ENCODE measurements at regions of chr2 and their contacts with region 1.

Region 1: DNA sequence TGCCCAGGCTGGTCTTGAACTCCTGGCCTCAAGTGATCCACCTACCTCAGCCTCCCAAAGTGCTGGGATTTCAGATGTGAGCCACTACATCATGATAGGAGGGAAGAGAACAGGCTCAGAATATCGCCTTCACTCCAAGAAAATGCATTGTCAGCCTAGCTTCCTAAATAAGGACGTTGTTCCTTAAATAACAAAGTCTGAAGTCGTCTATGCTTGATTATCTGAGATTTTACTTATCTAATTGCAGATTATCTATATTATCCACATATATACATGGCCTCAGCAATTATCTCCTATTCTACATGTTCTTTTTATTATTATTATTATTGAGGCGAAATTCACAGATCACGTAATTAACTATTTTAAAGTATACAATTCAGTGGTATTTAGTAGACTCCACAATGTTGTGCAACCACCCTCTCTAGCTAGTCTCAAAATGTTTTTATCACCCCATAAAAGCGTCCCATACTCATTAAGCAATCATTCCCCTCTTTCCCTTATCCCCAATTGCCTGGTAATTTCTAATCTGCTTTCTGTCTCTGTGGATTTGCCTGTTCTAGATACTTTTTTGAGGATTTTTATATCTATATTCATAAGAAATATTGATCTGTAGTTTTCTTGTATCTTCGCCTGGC is 95.1 kb upstream of the RFX8 start:
- DNase-seq: no peak
- ATAC-seq: no peak
- H3K4me3 ChIP-seq: peak overlapping the region; percentile 12
- H3K4me3 Mint-ChIP-seq: peak overlapping the region; percentile 61 to 90 (median 80)
- H3K27ac ChIP-seq: no peak overlapping the region
- H3K27ac Mint-ChIP-seq: peak overlapping the region; percentile 82 to 96 (median 91)
- H3K4me1 ChIP-seq: peaks cover 10 to 33% of the 10 kb centered on the region in 2 donors
- H3K4me1 Mint-ChIP-seq: peaks cover 16 to 75% (median 62%) of the 10 kb centered on the region in 7 donors
- H3K27me3 ChIP-seq: no peaks in the 10 kb centered on the region
- H3K27me3 Mint-ChIP-seq: peaks cover 0 to 15% (median 0%) of the 10 kb centered on the region in 5 donors

Region 2: GRCh38 chr2:100235098-100235497 is 1334.9 kb before region 1 on chr2:
- CTCF ChIA-PET with region 1: no interaction called
- POLR2A ChIA-PET with region 1: no interaction called
- intact Hi-C with region 1: no loop called
- DNase-seq: peak in 5 of 9 donors; percentile 5 to 36 (median 32)
- ATAC-seq: peak; percentile 63
- H3K4me3 ChIP-seq: no peak overlapping the region
- H3K4me3 Mint-ChIP-seq: peak overlapping the region; percentile 8 to 70 (median 45)
- H3K27ac ChIP-seq: no peak overlapping the region
- H3K27ac Mint-ChIP-seq: peak overlapping the region; percentile 7 to 90 (median 76)
- H3K4me1 ChIP-seq: peaks cover 8 to 15% of the 10 kb centered on the region in 2 donors
- H3K4me1 Mint-ChIP-seq: peaks cover 12 to 33% (median 25%) of the 10 kb centered on the region in 7 donors
- H3K27me3 ChIP-seq: no peaks in the 10 kb centered on the region
- H3K27me3 Mint-ChIP-seq: peaks cover 0 to 4% (median 0%) of the 10 kb centered on the region in 5 donors

Region 3: GRCh38 chr2:101473911-101474701 is 95.9 kb before region 1 on chr2:
- CTCF ChIA-PET with region 1: no interaction called
- POLR2A ChIA-PET with region 1: interaction called, 3 read pairs
- intact Hi-C with region 1: loop called (anchors 2 to 5 kb)
- DNase-seq: peak; percentile 7 to 70 (median 20)
- ATAC-seq: peak; percentile 46
- H3K4me3 ChIP-seq: peak overlapping the region; percentile 48
- H3K4me3 Mint-ChIP-seq: peak overlapping the region; percentile 81 to 90 (median 85)
- H3K27ac ChIP-seq: no peak overlapping the region
- H3K27ac Mint-ChIP-seq: peak overlapping the region in 5 of 9 donors; percentile 36 to 92 (median 73)
- H3K4me1 ChIP-seq: peaks cover 0 to 6% of the 10 kb centered on the region in 2 donors
- H3K4me1 Mint-ChIP-seq: peaks cover 6 to 50% (median 11%) of the 10 kb centered on the region in 7 donors
- H3K27me3 ChIP-seq: no peaks in the 10 kb centered on the region
- H3K27me3 Mint-ChIP-seq: peaks cover 0 to 7% (median 0%) of the 10 kb centered on the region in 5 donors

Region 4: DNA sequence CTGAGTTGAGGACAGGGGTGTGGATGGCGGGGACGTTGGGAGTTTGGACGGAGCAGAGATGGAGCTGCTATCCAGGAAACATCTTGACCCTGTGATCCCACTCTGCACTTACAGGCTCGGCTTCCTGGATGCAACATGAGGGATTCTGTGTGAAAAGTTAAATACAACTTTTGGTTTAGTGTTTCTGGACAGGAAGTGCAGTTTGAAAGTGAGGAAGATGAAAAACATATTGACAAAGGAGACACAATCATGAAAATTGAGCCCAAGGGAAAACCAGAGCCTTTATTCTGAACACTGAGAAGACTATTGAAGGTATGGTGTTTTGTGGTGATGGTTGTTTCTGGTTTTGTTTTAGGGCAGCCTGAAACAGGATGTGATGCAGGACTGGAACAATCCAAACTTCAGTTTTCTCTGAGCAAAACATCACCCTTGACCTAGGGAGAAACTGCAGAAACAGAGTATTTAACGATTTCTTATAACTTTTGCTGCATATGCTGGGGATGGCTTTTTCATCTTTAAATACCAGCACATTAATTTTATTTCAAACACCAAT is 18.6 kb before region 1 on chr2:
- CTCF ChIA-PET with region 1: no interaction called
- POLR2A ChIA-PET with region 1: interaction called, 4 read pairs
- intact Hi-C with region 1: loop called (anchors 1 to 2 kb)
- DNase-seq: peak in 2 of 9 donors; percentile 14 to 24
- ATAC-seq: no peak
- H3K4me3 ChIP-seq: no peak overlapping the region
- H3K4me3 Mint-ChIP-seq: peak overlapping the region in 6 of 10 donors; percentile 2 to 69 (median 36)
- H3K27ac ChIP-seq: no peak overlapping the region
- H3K27ac Mint-ChIP-seq: peak overlapping the region in 4 of 9 donors; percentile 17 to 82 (median 45)
- H3K4me1 ChIP-seq: peaks cover 0 to 15% of the 10 kb centered on the region in 2 donors
- H3K4me1 Mint-ChIP-seq: peaks cover 16 to 27% (median 21%) of the 10 kb centered on the region in 7 donors
- H3K27me3 ChIP-seq: no peaks in the 10 kb centered on the region
- H3K27me3 Mint-ChIP-seq: no peaks in the 10 kb centered on the region

Region 5: GRCh38 chr2:101558740-101559519 is 11.1 kb before region 1 on chr2:
- CTCF ChIA-PET with region 1: no interaction called
- POLR2A ChIA-PET with region 1: interaction called, 4 read pairs
- intact Hi-C with region 1: loop called in 1 of 2 experiments (anchors 1 kb)
- DNase-seq: no peak
- ATAC-seq: no peak
- H3K4me3 ChIP-seq: no peak overlapping the region
- H3K4me3 Mint-ChIP-seq: peak overlapping the region in 1 of 10 donors; percentile 17
- H3K27ac ChIP-seq: no peak overlapping the region
- H3K27ac Mint-ChIP-seq: peak overlapping the region in 1 of 9 donors; percentile 28
- H3K4me1 ChIP-seq: peaks cover 13 to 32% of the 10 kb centered on the region in 2 donors
- H3K4me1 Mint-ChIP-seq: peaks cover 28 to 43% (median 37%) of the 10 kb centered on the region in 7 donors
- H3K27me3 ChIP-seq: no peaks in the 10 kb centered on the region
- H3K27me3 Mint-ChIP-seq: no peaks in the 10 kb centered on the region

Region 6: GRCh38 chr2:101623031-101623521 is 53.1 kb after region 1 on chr2:
- CTCF ChIA-PET with region 1: no interaction called
- POLR2A ChIA-PET with region 1: interaction called, 3 read pairs
- intact Hi-C with region 1: loop called in 1 of 2 experiments (anchors 5 kb)
- DNase-seq: peak in 7 of 9 donors; percentile 35 to 70 (median 62)
- ATAC-seq: peak; percentile 95
- H3K4me3 ChIP-seq: no peak overlapping the region
- H3K4me3 Mint-ChIP-seq: peak overlapping the region; percentile 4 to 80 (median 52)
- H3K27ac ChIP-seq: no peak overlapping the region
- H3K27ac Mint-ChIP-seq: peak overlapping the region; percentile 57 to 94 (median 80)
- H3K4me1 ChIP-seq: peaks cover 5 to 15% of the 10 kb centered on the region in 2 donors
- H3K4me1 Mint-ChIP-seq: peaks cover 18 to 43% (median 38%) of the 10 kb centered on the region in 7 donors
- H3K27me3 ChIP-seq: no peaks in the 10 kb centered on the region
- H3K27me3 Mint-ChIP-seq: no peaks in the 10 kb centered on the region

Region 7: DNA sequence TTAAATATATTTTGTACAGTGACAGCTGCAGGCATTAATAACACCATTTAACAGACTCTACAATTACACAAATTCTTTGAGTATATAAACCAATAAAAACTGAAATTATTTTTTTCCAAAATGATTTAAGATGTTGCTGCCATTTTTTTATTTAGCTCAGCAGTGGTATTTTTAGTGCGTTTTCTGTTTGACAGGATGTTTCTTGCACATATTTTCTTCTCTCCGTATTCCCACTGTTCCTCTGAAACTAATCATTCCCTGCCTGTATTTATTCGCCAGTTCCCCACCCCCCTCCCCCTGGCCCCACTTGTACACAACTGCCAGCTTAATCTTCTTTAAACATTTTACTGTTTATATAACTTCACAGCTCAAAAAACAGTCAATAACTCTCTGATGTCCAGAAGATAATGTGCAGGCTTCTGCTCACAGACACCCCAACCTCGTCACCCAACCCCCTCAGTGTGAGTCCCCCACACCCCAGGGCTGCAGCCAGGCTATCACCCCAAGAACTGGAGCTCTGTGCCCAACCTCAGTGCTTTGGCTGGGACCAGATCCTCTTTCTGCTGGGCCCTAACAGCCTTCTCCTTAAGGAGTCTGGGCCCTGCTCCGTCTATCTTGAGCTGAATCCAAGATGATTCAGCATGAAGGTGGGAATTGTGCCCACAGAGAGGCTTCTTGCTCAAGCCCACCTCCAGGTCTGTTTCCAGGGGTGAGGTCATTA is 85.9 kb after region 1 on chr2:
- CTCF ChIA-PET with region 1: no interaction called
- POLR2A ChIA-PET with region 1: no interaction called
- intact Hi-C with region 1: loop called (anchors 2 kb)
- DNase-seq: no peak
- ATAC-seq: no peak
- H3K4me3 ChIP-seq: no peak overlapping the region
- H3K4me3 Mint-ChIP-seq: no peak overlapping the region
- H3K27ac ChIP-seq: no peak overlapping the region
- H3K27ac Mint-ChIP-seq: no peak overlapping the region
- H3K4me1 ChIP-seq: peaks cover 5 to 10% of the 10 kb centered on the region in 2 donors
- H3K4me1 Mint-ChIP-seq: peaks cover 11 to 25% (median 16%) of the 10 kb centered on the region in 7 donors
- H3K27me3 ChIP-seq: no peaks in the 10 kb centered on the region
- H3K27me3 Mint-ChIP-seq: no peaks in the 10 kb centered on the region

Region 8: GRCh38 chr2:101831351-101831865 is 261.4 kb after region 1 on chr2:
- CTCF ChIA-PET with region 1: no interaction called
- POLR2A ChIA-PET with region 1: interaction called, 3 read pairs
- intact Hi-C with region 1: loop called in 1 of 2 experiments (anchors 5 kb)
- DNase-seq: peak; percentile 17 to 68 (median 62)
- ATAC-seq: peak; percentile 76
- H3K4me3 ChIP-seq: no peak overlapping the region
- H3K4me3 Mint-ChIP-seq: peak overlapping the region in 8 of 10 donors; percentile 12 to 77 (median 60)
- H3K27ac ChIP-seq: no peak overlapping the region
- H3K27ac Mint-ChIP-seq: peak overlapping the region in 8 of 9 donors; percentile 7 to 88 (median 72)
- H3K4me1 ChIP-seq: peaks cover 13 to 44% of the 10 kb centered on the region in 2 donors
- H3K4me1 Mint-ChIP-seq: peaks cover 45 to 56% (median 54%) of the 10 kb centered on the region in 7 donors
- H3K27me3 ChIP-seq: no peaks in the 10 kb centered on the region
- H3K27me3 Mint-ChIP-seq: no peaks in the 10 kb centered on the region

Measured in naive thymus-derived CD4-positive, alpha-beta T cell (primary cell).